Body of pancreas (tissue), 4 donors: ENCODE measurements at regions of chr1 and their contacts with region 1.

Region 1: GRCh38 chr1:2875707-2876561 is 74.4 kb upstream of the TTC34 start:
- DNase-seq: peak; percentile 28 to 57 (median 39)
- ATAC-seq: peak; percentile 46
- H3K4me3 ChIP-seq: no peak overlapping the region
- H3K27ac ChIP-seq: peak overlapping the region in 1 of 4 donors; percentile 8
- H3K4me1 ChIP-seq: peaks cover 17% of the 10 kb centered on the region
- H3K27me3 ChIP-seq: no peaks in the 10 kb centered on the region
- CTCF ChIP-seq: peak in 6 of 7 experiments; percentile 38 to 56 (median 48)
- POLR2A ChIP-seq: no peak

Region 2: GRCh38 chr1:2914702-2915101 is 38.8 kb after region 1 on chr1:
- intact Hi-C with region 1: no loop called
- DNase-seq: peak in 1 of 4 donors; percentile 21
- ATAC-seq: peak; percentile 48
- H3K4me3 ChIP-seq: no peak overlapping the region
- H3K27ac ChIP-seq: no peak overlapping the region
- H3K4me1 ChIP-seq: no peaks in the 10 kb centered on the region
- H3K27me3 ChIP-seq: no peaks in the 10 kb centered on the region
- CTCF ChIP-seq: peak in 4 of 7 experiments; percentile 12 to 30 (median 26)
- POLR2A ChIP-seq: no peak

Region 3: DNA sequence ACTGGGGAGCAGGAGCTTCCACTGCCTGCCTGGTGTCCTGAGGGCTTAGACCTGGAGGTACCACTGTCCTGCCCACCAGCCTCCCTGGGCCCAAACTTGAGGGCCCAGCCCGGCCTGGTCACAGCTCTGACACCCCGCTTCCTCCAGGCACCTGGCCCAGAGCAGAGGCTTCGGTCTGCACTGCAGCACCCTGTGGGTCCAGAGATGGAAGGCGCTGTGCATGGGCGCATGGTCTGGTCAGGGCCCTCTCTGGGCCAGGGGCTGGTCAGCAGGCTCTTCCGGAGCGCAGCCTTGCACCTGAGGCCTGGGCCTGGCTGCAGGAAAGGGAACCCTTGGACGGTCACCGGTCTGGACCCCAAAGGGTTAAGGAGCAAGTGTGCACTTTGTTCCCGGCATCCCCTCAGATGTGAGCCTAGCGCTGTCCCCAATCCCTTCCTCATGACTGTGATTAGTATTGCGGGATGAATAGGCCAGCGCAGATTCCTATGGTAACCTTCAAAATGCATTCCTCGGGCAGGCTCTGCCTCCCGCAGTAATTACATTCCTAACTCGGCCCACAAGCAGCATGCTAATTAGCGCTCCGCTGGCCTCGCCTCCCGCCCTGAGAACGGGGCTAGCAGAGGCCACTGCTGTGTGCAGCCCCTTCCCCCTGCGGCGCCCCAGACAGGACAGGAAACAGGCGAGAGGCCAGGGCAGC is 229.4 kb after region 1 on chr1:
- intact Hi-C with region 1: no loop called
- DNase-seq: peak; percentile 37 to 58 (median 41)
- ATAC-seq: peak; percentile 79
- H3K4me3 ChIP-seq: no peak overlapping the region
- H3K27ac ChIP-seq: peak overlapping the region; percentile 15 to 74 (median 44)
- H3K4me1 ChIP-seq: peaks cover 31% of the 10 kb centered on the region
- H3K27me3 ChIP-seq: no peaks in the 10 kb centered on the region
- CTCF ChIP-seq: no peak
- POLR2A ChIP-seq: no peak

Region 4: GRCh38 chr1:3410142-3410925 is 534.4 kb after region 1 on chr1:
- intact Hi-C with region 1: loop called (anchors 10 kb)
- DNase-seq: peak; percentile 47 to 67 (median 62)
- ATAC-seq: peak; percentile 62
- H3K4me3 ChIP-seq: no peak overlapping the region
- H3K27ac ChIP-seq: no peak overlapping the region
- H3K4me1 ChIP-seq: no peaks in the 10 kb centered on the region
- H3K27me3 ChIP-seq: no peaks in the 10 kb centered on the region
- CTCF ChIP-seq: peak in 6 of 7 experiments; percentile 12 to 60 (median 51)
- POLR2A ChIP-seq: no peak